Breast epithelium (tissue), 4 donors: ENCODE measurements at regions of chr1 and their contacts with region 1.

Region 1: DNA sequence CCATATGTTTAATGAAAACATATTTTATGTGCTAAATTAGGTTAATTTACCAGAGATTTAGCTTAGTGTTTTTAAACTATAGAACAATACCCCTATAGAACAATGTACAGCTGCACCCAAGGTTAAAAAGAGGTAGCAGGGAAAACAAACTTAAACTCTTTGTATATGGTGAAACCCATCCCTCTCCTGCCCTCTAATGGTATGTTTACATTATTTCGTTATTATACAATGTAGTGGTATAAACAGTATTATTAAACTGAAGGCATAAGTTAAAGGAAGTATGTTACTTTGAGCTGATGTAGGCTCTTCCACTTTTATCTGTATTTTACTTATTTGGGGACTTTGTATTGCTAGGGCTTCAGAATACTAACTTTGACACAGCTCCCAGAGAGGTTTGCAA is 16.7 kb upstream of the ZYG11A start:
- DNase-seq: no peak
- H3K4me3 ChIP-seq: no peak overlapping the region
- H3K27ac ChIP-seq: no peak overlapping the region
- H3K4me1 ChIP-seq: no peaks in the 10 kb centered on the region
- H3K27me3 ChIP-seq: no peaks in the 10 kb centered on the region
- CTCF ChIP-seq: no peak
- POLR2A ChIP-seq: no peak

Region 2: DNA sequence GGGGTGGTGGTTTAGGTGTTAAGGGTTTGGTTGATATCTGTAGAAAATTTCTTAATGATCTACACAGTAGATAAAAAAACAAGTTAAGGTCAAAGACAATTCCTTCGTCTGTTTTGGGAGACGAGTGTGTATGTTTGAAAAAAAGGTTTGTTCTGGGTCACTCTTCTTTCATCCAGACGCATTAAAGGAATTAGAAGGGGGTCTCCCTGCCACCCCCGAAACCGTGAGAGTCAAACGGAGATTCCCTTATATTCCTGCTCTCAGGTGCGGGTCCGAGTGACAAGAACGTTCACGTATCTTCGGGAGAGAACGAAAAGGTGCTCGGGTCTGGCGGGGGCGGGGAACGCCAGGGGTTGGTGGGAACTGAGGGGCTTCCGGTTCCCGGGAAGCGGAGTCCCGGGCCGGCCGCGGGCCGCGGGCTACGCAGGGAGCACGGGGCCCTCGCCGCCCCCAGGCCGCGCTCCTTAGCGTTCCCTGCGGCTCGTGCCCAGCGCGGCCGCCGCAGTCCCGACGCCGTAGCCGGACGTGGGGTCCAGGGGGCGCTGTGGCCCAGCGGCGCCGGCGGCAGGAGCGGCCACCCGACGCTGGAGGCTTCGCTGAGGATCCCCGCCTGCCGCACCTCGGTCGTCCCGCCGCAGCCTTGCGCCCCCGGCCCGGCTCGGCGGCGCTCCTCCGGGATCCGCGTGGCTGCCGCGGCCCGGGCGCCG is 684.2 kb before region 1 on chr1 and contains the start of gene ZFYVE9:
- intact Hi-C with region 1: loop called (anchors 5 kb)
- DNase-seq: peak; percentile 33 to 67
- H3K4me3 ChIP-seq: peak within 1 kb of the TSS; percentile 72 to 97 (median 91)
- H3K27ac ChIP-seq: peak within 1 kb of the TSS; percentile 95 to 99
- H3K4me1 ChIP-seq: peaks cover 0 to 9% of the 10 kb centered on the region in 2 donors
- H3K27me3 ChIP-seq: no peaks in the 10 kb centered on the region
- CTCF ChIP-seq: peak in 1 of 3 donors; percentile 88
- POLR2A ChIP-seq: no peak
- total RNA-seq, gene ZFYVE9: 31.1 to 44.3 (median 32.8) TPM